GM18951 (cell line): ENCODE measurements at regions of chr14 and their contacts with region 1.

Region 1: DNA sequence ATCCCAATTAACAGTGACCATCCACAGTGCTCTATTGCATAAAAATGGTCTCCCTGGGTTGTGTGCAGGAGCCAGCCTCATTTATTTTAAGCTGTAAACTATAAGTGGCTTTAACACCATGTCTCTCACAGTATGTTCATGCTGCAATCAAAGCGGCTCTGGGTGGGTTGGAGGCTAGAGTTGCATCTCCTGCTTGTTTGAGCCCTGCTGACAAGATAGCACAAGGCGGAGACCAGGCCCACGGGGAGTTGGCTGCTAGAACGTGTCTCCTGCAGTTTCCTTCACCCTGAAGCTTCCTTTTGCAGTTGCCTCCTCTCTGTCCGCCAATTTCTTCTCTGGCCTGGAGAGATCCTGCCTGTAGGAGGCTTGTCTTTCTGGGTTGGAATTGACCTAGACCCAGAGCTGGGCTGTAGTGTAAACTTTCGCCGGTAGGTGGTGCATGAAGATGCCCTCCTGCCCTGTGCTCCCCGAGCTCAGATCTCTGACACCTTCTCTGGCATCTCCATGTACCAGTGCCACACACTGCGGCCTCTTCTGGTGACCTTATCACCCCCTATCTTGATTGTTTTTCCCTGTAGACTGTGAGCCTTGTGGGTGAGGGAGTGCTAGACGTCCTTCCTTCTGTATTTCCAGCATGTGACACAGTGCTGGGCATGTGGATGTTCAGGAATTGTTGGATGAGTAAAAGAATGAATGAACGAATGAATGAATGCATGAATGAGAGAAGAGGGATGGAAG is 10.3 kb downstream of the OTUB2 start:
- POLR2A ChIP-seq: no peak

Region 2: GRCh38 chr14:94136575-94137331 is 100.3 kb after region 1 on chr14:
- in situ Hi-C with region 1: loop called (anchors 10 kb)
- POLR2A ChIP-seq: no peak

Region 3: DNA sequence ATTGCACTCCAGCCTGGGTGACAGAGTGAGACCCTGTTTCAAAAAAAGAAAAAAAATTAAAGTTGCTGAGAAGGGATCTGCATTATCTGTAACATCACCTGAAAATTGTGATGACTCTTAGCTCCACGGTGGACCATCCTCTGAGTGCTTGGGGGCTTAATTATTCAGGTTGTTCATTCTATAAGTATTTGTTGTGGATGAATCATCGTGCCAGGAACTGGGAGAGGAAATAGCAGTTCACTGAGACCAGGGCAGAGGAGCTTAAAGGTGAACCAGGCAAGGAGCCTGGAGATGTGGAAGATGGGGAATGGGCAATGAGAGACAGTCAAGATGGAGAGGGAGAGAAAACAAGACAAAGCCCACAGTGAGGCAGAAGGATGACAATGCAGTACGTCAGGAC is 758.9 kb after region 1 on chr14:
- in situ Hi-C with region 1: no loop called
- POLR2A ChIP-seq: no peak